ENCODE measurements at regions of chr2 and their contacts with region 1.

Region 1: GRCh38 chr2:231425811-231426728 is 30.6 kb downstream of the B3GNT7 start:
- DNase-seq: no peak
- H3K4me3 ChIP-seq: no peak overlapping the region
- H3K27ac ChIP-seq: no peak overlapping the region
- H3K4me1 ChIP-seq: no peaks in the 10 kb centered on the region
- H3K27me3 ChIP-seq: no peaks in the 10 kb centered on the region
- CTCF ChIP-seq: no peak
- EP300 ChIP-seq: no peak
- RAD21 ChIP-seq: no peak

Region 2: DNA sequence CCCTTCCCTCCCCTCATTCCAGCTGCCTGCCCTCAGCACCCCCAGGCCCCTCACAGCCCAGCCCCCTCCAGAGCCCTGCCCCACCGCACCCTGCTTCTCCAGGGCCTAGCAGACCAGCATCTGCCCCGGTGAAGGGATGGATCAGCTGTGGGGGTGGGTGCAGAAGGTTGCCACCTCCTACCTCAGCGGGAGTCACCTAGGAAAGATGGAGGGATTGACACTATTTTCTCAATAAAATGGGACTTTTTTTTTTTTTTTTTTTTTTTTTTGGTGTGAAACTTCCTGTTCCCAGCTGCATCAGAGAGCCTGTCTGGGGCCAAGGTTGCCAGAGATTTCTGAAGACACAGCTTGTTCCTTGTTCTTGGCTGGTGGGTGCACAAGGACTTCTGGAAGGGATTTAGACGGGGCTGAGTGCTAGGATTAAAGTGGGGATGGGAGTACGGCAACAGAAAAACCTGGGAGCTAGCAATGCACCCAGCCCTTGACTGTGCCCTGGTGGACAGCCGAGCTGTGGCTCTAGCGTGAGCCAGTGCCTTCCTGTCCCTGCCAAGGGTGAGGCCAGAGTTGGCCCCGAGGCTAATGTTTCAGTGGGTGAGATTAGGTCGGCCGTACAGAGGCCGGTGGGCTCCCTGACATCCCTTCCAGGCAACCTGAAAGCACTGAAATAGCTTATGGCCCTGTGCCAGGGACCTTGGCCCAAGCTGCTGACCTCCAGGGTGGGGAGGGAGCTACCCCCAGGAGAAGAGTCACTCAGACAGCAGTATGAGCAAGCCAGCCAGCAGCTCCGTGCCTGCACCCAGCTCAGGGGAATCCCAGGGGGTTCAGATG is 26.0 kb before region 1 on chr2:
- CTCF ChIA-PET with region 1: interaction called, 11 read pairs
- POLR2A ChIA-PET with region 1: no interaction called
- DNase-seq: peak; percentile 88
- H3K4me3 ChIP-seq: no peak overlapping the region
- H3K27ac ChIP-seq: peak overlapping the region in 1 of 2 experiments; percentile 72; a peak in 2 of 4 replicates
- H3K4me1 ChIP-seq: peaks cover 0 to 20% of the 10 kb centered on the region in 2 experiments; a peak in 1 of 4 replicates
- H3K27me3 ChIP-seq: no peaks in the 10 kb centered on the region
- CTCF ChIP-seq: no peak
- EP300 ChIP-seq: 0 out of 4 replicates have a peak, but pooled peaks of 1 of the 2 experiments have one; percentile 6
- RAD21 ChIP-seq: peak; percentile 47

Region 3: DNA sequence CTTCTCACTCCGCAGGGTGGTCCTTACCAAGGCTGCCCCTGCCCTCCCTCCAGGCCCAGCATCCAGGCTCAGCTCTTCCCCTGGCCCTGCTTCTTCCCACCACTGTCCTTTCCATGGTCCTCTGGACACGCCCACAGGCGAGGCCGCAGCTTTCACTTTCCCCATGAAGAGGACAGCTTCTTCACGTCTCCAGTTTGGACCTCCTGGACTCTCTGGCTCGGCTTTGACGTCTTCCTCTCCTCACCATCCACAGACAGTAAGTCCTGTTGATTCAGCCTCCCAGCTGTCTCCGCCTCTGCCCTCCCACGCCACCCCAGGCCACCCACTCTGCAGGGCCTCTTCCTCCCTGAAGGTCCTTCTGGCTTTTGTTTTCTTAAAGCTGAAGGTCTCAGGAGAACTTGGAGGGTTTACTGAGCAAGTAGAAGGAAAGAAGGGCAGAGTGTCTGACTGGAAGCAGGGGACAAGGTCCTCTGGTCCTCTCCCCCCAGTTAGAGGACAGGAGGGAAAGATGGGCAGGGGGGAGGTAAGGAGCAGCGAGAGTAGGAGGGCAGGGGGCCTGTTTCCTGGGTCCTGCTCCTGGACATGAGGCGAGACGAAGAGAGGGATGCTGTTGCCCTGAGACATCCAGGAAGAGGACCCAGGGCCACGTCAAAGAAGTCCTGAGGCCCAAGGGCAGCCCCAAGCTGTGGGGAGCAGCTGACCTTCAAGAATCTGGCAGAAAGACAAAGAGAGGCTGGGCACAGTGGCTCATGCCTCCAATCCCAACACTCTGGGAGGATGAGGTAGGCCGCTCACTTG is 128.9 kb after region 1 on chr2:
- CTCF ChIA-PET with region 1: no interaction called
- POLR2A ChIA-PET with region 1: no interaction called
- DNase-seq: no peak
- H3K4me3 ChIP-seq: no peak overlapping the region
- H3K27ac ChIP-seq: no peak overlapping the region
- H3K4me1 ChIP-seq: no peaks in the 10 kb centered on the region
- H3K27me3 ChIP-seq: no peaks in the 10 kb centered on the region
- CTCF ChIP-seq: no peak
- EP300 ChIP-seq: no peak
- RAD21 ChIP-seq: no peak

Measured in SK-N-SH (cell line).